Right ventricle myocardium inferior (tissue), 1 donor: ENCODE measurements at regions of chr11 and their contacts with region 1.

Region 1: GRCh38 chr11:103927535-103927934 is 108.9 kb upstream of the DDI1 start:
- DNase-seq: no peak
- ATAC-seq: peak; percentile 59

Region 2: GRCh38 chr11:103682318-103683184 is 245.0 kb before region 1 on chr11:
- intact Hi-C with region 1: loop called (anchors 10 kb)
- DNase-seq: peak; percentile 55
- ATAC-seq: peak; percentile 96

Region 3: DNA sequence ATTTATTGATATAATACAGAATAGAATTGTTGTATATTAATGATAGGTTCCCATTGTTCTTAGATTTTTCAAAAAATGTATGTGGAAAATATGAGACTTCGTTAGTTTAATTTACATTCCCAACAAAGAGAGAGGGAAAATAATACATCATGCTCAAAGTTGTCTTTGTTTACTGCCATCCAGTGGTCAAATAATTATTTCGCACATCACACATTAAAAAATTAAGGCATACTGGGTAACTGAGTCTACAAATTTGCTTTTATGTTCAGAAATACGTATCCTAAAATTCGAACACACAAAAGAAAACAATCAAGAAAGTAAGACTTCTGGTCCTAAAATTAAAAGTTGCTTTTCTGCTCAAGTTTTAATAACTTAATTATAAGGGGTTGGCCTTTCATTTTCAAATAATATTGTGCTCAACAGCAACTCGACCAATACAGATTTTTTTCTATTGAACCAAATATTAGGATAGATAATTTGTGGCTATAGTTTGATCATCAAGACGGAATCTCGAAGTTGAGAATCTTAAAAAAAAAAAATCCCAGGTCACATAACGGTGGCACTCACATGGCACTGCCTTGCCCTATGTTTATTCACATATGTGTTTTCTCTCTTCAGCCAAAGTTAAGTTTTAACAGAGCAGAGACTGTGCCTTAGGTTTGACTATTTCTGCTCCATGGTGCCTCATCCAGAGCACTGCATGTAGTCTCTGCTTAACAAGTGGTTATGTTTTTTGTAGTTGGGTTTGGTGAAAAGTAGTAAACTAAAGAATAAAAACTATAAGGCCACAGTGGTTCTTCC is 224.1 kb after region 1 on chr11:
- intact Hi-C with region 1: loop called (anchors 5 kb)
- DNase-seq: no peak
- ATAC-seq: no peak

Region 4: DNA sequence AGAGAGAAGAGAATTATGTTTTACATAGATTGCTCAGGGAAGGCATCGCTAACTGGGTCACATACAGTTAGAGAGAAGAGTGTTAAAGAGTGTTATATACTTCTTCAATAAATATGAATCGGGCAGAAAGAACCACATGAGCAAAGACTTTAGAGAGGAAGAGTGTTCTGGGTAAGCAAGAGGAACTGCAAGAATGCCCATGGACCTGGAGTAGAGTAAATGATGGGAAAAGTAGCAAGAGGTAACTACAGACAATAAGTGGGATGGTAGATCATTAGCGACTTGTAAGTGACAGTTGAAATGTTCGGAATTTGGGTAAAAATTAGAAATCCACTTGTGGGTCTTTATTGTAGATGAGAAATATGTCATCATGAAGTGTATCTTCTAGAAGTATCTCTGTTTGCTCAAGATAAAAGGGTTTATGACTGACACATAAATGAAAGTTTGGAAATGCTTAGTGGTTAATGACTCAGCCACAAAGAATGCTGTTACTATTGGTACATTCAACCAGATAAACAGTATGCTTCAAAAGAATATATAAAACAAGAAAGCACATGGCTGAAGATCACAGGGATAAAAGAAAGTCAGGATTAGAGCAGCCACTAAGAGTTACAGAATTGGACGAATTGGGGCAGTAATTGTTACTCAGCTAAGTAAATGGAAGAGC is 741.4 kb after region 1 on chr11:
- intact Hi-C with region 1: no loop called
- DNase-seq: no peak
- ATAC-seq: no peak